K562 (cell line): ENCODE measurements at regions of chr2 and their contacts with region 1.

Region 1: DNA sequence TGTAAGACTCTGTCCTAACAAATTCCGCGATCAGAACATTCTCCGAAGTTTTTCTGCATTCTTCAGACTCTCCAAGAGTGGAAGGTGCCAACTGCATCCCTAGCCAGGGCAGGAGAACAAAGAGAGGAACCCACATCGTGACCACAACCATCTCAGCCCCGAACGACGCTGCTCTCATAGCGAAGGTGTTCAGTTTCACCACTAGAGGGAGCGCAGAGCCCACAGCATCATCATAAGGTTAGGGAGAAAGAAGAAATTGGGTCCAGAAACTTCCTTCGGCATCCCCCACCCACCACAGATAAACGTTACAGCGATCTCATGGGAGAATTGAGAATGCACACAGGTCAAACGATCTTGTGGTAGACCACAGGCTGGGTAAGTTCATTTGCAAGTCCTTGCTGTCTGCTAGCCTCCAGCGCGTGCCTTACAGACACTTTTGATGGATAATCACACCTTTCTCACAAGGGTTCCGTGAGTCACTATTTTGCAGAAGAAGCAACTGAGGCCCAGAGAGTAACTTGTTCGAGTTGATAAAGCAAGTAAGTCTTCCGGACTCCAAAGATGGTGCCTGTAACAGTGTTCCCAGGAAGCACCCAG is 53.7 kb upstream of the ARL4C start:
- DNase-seq: peak; percentile 43 to 66 (median 58)
- ATAC-seq: peak; percentile 85
- H3K4me3 ChIP-seq: no peak overlapping the region
- H3K27ac ChIP-seq: no peak overlapping the region
- H3K4me1 ChIP-seq: no peaks in the 10 kb centered on the region; a peak in 1 of 5 replicates
- H3K27me3 ChIP-seq: no peaks in the 10 kb centered on the region
- CTCF ChIP-seq: peak; percentile 68 to 78 (median 73)
- EP300 ChIP-seq: no peak
- POLR2A ChIP-seq: no peak
- RAD21 ChIP-seq: peak; percentile 60 to 78

Region 2: GRCh38 chr2:234406085-234406484 is 144.5 kb before region 1 on chr2:
- CTCF ChIA-PET with region 1: no interaction called
- POLR2A ChIA-PET with region 1: no interaction called
- in situ Hi-C with region 1: no loop called
- intact Hi-C with region 1: no loop called
- DNase-seq: peak in 1 of 4 experiments; percentile 6
- ATAC-seq: peak; percentile 63; the same call in 2 of the 3 replicates
- H3K4me3 ChIP-seq: no peak overlapping the region
- H3K27ac ChIP-seq: no peak overlapping the region
- H3K4me1 ChIP-seq: no peaks in the 10 kb centered on the region
- H3K27me3 ChIP-seq: peaks cover 0 to 6% of the 10 kb centered on the region in 2 experiments; a peak in 1 of 5 replicates
- CTCF ChIP-seq: peak in 2 of 3 experiments; percentile 10 to 34; a peak in 2 of 6 replicates
- EP300 ChIP-seq: no peak
- POLR2A ChIP-seq: no peak
- RAD21 ChIP-seq: peak; percentile 40 to 57

Region 3: DNA sequence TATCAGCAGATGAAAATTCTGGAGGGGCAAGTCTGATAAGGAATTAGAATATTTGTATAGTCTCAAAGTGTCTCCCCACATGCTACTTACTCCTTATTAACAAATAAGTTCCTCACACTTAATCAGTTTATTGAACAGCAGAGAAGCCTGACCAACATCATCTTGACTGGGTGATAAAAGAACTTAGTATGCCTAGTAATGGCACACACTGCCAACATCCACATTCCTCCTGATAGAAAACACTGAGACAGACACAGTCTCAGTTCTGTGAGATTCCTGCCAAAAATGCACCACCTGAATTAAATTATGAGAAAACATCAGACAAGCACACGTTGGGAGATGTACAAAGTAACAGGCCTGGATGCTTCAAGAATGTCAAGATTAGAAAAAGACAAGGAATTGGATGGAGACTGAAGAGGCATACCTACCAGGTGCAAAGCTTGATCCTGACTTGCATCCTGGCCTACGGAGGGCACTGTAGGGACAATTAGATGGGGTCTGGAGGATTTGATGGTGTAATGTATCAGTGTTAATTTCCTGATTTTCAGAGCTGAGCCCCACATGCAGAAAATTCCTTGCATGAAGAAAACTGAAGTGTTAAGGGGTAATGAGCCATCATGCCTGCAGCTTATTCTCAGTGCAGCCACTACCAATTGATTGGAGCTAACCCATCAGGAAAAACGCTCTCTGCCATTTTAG is 200.8 kb after region 1 on chr2:
- CTCF ChIA-PET with region 1: no interaction called
- POLR2A ChIA-PET with region 1: no interaction called
- in situ Hi-C with region 1: no loop called
- intact Hi-C with region 1: no loop called
- DNase-seq: no peak
- ATAC-seq: no peak
- H3K4me3 ChIP-seq: no peak overlapping the region
- H3K27ac ChIP-seq: no peak overlapping the region
- H3K4me1 ChIP-seq: no peaks in the 10 kb centered on the region
- H3K27me3 ChIP-seq: no peaks in the 10 kb centered on the region
- CTCF ChIP-seq: no peak
- EP300 ChIP-seq: no peak
- POLR2A ChIP-seq: no peak
- RAD21 ChIP-seq: no peak

Region 4: GRCh38 chr2:235050992-235051351 is 500.4 kb after region 1 on chr2:
- CTCF ChIA-PET with region 1: no interaction called
- POLR2A ChIA-PET with region 1: no interaction called
- in situ Hi-C with region 1: no loop called
- intact Hi-C with region 1: loop called (anchors 5 kb)
- DNase-seq: peak; percentile 7 to 32 (median 20)
- ATAC-seq: peak; percentile 59
- H3K4me3 ChIP-seq: no peak overlapping the region
- H3K27ac ChIP-seq: no peak overlapping the region
- H3K4me1 ChIP-seq: no peaks in the 10 kb centered on the region; a peak in 1 of 5 replicates
- H3K27me3 ChIP-seq: peaks cover 6 to 70% of the 10 kb centered on the region in 2 experiments; a peak in 3 of 5 replicates
- CTCF ChIP-seq: no peak
- EP300 ChIP-seq: no peak
- POLR2A ChIP-seq: no peak
- RAD21 ChIP-seq: no peak

Region 5: GRCh38 chr2:235116885-235117492 is 566.4 kb after region 1 on chr2:
- CTCF ChIA-PET with region 1: interaction called, 8 read pairs
- POLR2A ChIA-PET with region 1: no interaction called
- in situ Hi-C with region 1: no loop called
- intact Hi-C with region 1: loop called (anchors 1 kb)
- DNase-seq: peak in 3 of 4 experiments; percentile 8 to 15 (median 10)
- ATAC-seq: no peak
- H3K4me3 ChIP-seq: no peak overlapping the region
- H3K27ac ChIP-seq: no peak overlapping the region
- H3K4me1 ChIP-seq: no peaks in the 10 kb centered on the region; a peak in 1 of 5 replicates
- H3K27me3 ChIP-seq: peaks cover 0 to 6% of the 10 kb centered on the region in 2 experiments; a peak in 2 of 5 replicates
- CTCF ChIP-seq: peak in 1 of 3 experiments; percentile 56; a peak in 3 of 6 replicates
- EP300 ChIP-seq: no peak
- POLR2A ChIP-seq: no peak
- RAD21 ChIP-seq: peak; percentile 48 to 66; a peak in 3 of 4 replicates